Psoas muscle (tissue), 8 donors: ENCODE measurements at regions of chr6 and their contacts with region 1.

Region 1: DNA sequence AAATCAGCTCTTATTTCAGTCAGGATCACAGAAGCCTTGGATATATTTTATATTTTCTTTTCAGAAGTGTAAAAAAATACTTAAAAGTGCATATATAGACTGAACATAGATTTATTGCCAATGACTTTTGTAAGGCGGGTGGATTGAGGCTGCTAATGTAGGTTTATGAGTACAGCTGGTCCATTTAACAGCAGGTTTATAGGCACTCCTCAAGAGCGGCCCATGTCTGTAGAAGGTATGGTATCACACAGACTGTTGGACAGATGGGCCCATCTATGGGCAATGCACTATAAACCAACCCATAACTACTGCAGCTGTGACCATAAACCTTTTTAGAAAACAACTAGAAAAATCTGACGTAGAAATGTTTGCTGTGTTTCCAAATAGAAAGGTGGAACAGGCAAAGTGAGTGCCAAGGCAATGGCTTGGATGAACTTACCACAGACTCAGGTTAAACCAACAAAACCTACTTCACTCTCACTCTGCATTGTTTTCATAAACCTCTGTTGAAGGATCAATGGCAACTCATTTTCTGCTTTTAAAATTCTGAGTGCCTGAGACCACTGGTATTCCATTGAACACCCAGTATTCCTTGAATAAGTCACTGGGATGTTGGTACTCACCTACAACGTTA is 170.6 kb upstream of the EYA4 start:
- DNase-seq: no peak
- ATAC-seq: no peak
- H3K4me3 ChIP-seq: no peak overlapping the region
- H3K27ac ChIP-seq: no peak overlapping the region
- H3K4me1 ChIP-seq: no peaks in the 10 kb centered on the region
- H3K27me3 ChIP-seq: no peaks in the 10 kb centered on the region
- CTCF ChIP-seq: no peak

Region 2: GRCh38 chr6:133396233-133396983 is 325.9 kb after region 1 on chr6:
- intact Hi-C with region 1: loop called in 1 of 2 experiments (anchors 10 kb)
- DNase-seq: no peak
- ATAC-seq: peak; percentile 56 to 79 (median 73)
- H3K4me3 ChIP-seq: no peak overlapping the region
- H3K27ac ChIP-seq: peak overlapping the region; percentile 27
- H3K4me1 ChIP-seq: peaks cover 27% of the 10 kb centered on the region
- H3K27me3 ChIP-seq: no peaks in the 10 kb centered on the region
- CTCF ChIP-seq: no peak

Region 3: DNA sequence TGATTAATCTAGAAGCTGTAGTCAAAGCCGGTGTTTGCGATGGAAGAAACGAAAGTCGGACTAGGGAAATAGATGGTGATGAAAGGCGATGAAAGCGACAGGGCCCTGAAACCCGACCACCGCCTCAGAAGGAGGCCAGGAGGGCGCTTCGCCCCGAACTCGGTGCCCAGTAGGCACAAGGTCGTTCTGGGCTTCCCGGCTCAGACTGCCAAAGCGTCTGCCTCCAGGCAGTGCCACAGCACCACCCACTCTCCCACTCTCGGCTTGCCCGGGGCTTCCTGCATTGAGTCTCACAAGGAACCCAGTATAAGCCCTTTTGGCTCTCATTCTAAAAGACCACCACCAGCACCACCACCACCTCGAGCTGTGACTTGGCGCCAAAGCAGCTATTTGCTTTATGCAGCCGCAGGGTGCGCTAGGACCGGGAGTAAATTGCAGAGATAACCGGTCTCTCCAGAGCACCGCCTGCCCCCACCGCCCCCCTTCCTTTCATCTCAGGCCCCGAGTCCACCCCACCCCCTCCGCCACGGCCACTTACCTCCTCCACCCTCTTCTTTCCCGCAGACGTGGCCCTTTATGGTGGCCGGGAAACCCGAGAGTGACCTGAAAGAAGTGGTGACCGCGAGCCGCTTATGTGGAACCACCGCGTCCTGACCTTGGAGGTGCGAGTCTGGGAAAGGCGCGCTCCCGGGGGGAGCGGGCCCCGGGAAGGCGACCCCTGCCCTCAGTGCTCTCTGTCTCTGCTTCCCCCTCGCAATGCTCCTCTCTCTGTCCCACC is 820.8 kb after region 1 on chr6:
- intact Hi-C with region 1: loop called in 1 of 2 experiments (anchors 10 kb)
- DNase-seq: peak in 1 of 2 donors; percentile 34
- ATAC-seq: peak in 3 of 4 donors; percentile 58 to 76 (median 62)
- H3K4me3 ChIP-seq: peak overlapping the region; percentile 67
- H3K27ac ChIP-seq: no peak overlapping the region
- H3K4me1 ChIP-seq: peaks cover 12% of the 10 kb centered on the region
- H3K27me3 ChIP-seq: peaks cover 10 to 77% (median 34%) of the 10 kb centered on the region in 3 donors
- CTCF ChIP-seq: no peak